ENCODE measurements at regions of chr17 and their contacts with region 1.

Region 1: DNA sequence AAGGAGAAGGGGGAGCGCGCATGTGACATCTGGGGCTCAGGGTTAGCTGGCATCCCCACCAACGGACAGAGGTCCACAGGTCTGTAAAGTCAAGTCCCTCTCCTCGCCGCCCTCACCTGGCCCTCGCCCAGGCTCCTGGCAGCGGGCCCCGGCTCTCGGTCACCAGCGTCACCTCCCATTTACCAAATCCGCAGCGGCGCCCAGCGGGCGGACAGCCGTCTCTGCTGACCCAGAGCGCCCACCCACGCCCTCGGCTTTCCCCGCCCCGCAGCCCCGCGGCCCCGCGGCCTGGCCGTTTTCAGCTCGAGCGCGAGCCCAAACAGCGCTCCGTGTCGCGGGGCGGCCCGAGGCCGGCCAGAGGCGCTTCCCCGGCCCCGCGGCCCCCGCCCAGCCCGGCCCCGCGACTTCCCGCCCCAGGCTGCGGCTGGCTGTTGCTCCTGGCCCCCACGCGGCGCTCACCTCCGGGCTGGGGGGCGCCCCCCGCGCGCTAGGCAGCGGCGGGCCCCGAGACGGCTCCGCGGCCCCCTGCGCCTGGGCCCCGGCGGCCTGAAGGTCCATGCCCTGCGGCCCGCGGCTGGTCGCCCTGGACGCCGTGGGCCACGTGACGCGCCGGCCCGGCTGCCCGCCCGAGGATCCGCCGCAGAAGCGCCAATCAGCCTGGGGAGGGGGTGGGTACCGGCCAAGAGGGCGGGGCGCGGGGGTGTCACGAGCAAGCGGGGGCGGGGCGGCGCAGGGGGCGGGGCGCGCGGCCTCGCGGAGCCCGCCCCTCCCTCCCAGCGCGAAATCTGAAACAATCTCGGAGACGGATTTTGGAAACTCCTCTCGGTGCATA is at the start of gene COPRS:
- DNase-seq: peak; percentile 97
- total RNA-seq, gene COPRS: 41.0 to 54.8 TPM

Region 2: GRCh38 chr17:29929533-29930408 is 1929.1 kb before region 1 on chr17 and contains the start of gene SSH2:
- intact Hi-C with region 1: no loop called
- DNase-seq: peak; percentile 96
- total RNA-seq, gene SSH2: 26.0 to 33.3 TPM

Region 3: DNA sequence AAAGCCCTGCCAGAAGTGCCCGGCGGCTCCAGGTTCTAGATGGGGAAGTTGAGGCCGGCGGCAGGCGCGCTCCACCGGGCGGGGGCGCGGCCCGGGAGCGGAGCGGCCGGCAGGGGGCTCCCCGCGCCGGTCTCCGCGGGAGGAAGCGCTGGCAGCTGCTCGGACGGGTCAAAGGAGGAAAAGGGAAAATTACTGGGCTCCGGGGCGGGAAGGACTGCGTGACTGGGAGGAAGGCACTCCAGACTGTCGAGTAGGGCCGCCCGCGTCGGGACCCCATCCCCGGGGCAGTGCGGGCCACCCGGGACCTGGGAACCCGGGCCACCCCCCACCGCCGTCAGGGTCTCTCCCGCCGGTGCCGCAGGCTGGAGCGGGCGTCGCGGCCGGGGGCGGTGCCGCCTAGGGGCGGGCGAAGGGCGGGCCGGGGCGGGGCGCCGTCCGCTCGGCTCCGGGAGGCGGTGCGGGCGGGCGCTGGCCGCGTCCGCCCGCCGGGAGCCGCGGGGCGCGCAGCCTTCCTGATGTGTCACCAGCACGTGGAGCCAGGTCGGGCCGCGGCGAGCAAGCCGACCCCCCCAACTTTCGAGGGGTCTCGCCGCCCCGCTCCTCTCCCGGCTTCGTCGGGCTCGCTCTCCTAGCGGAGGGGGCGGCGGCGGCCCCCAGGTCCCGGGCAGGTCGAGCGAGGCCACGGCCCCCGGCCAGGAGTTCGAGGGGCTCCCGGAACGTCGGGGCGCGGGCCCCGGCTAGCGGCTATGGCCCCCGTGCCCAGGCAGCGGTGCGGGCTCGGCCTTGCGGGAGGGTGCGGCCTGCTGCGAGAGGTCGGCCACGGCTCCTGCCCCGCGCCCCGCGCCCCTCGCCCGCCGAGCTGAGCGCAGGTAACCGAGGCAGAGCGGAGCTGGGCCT is 299.9 kb before region 1 on chr17:
- intact Hi-C with region 1: loop called in 1 of 2 experiments (anchors 5 kb)
- DNase-seq: peak; percentile 94

Region 4: DNA sequence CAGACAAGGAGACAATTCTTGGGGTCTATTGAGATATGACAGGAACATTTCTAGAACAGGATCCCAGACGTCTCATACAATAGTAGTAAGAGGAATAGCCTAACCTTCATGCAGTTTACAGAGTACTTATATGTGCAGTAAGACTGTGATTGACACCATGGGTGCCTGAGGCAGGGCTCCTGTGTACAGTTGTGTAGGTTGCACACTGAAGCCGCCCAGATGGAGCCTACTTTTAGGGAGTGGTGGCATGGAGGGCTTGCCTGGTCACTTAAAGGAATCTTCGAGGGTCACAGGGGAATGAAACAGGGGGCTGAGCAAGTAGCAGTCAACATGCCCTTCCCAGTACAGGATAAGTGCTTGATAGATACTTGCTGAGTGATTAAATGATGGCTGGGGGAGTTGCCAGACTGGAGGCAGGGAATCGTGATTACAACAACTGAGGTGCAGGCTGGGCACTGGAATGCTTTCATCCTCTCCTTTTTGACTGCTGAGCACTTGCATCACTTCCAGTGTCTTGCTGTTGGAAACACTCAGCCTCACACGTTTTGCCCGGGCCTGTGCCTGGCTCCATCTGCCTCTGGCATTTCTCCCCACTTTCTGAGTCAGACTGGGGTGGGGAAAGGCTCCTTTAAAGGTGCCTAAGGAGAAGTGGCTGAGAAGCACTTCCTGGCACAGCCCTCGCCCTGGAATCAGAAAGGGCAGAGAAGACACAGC is 70.8 kb before region 1 on chr17:
- intact Hi-C with region 1: no loop called
- DNase-seq: no peak

Region 5: DNA sequence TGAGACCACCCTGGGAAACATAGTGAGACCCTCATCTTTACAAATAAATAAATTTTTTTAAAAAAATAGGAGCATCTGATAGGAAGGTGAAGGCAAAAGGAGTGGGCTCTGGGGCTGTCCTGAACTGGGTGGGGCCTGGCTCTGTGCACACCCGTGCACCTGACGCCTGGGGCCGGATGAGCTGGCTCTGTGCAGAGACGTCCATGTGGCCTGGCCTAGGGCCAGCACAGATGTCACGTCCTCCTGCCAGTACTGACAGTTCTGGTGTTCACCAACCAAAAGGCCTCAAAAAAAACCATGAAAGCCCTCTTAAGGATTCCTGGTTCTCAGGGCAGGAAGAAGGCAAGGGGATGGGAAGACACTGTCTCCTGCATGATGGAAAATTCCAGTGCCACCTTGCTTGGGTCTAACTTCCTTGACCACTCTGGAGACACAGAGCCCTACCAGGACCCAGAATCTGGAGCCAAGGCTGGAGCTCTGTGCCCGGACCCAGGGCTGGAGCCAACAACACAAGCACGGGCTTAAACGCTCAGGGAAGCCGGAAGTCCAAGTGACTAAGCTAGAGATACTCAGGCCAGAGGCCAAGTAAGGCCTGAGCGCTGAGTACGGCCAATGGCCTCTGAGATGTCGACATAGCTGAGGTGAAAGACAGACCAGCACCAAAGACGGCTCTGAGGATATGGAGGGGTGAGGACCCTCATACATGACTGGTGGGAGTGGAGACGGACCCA is 32.7 kb before region 1 on chr17:
- intact Hi-C with region 1: no loop called
- DNase-seq: peak; percentile 76

Region 6: DNA sequence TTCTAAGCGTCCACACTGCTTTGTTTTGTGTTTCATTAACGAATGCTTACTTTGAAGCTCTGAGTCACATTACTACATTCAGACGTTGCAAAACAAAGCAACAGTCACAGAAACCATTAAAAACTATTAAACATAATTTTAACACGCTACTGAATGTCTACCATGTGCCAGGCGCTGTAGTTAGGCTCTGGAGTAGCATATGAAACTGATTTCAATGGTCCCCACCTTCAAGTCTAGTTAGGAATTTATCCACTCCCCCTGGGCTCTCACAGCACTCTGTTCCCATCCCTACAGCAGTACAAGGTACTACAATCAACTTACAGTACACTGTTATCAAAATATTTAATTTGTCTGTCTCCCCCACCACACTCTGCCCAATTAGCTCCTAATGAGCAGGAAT is 42.0 kb after region 1 on chr17:
- intact Hi-C with region 1: loop called in 1 of 2 experiments (anchors 2 kb)
- DNase-seq: no peak

Measured in posterior vena cava (tissue), 2 donors.